Caco-2 (cell line): ENCODE measurements at regions of chr20 and their contacts with region 1.

Region 1: DNA sequence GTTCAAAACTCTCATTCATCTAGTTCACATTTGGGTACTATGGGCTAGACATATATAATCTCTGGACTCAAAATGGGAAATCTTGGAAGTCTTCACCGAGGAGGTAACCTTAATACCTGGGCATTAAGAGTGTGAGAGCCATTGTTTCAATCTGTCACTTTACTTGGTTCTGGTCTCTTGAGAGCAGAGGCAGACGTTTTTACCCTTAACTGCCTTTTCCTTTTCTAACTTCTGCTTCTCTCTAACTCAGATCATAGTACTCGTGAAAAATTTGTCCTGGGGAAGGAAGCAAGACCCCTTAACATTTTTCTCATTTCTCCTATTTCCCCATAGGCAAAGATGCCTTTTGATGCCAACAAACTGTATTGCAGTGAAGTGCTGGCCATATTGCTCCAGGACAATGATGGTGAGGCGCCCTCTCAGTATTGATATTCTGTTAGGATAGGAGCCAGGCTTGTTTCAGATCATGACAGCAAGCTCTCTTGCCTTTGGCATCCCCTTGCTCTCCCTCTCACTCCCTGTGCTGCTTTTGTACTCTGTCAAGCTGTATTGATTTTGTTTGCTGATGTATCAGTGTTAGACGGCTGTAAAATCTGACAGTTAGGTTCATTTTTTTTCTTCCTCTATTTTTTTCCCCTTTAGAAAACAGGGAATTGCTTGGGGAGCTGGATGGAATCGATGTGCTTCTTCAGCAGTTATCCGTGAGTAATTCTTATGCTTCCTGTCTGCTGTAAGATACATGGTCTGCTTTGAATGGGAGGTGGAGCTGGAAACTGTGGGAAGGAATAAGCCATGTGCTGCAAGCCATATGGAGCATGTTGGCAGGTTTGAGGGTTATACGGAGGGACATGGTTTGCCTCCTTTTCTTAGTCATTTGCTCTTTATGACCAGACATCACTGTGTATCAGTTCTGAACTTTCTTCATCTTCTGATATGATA is 83.5 kb downstream of the CTNNBL1 start:
- DNase-seq: no peak
- H3K4me3 ChIP-seq: no peak overlapping the region
- H3K4me3 Mint-ChIP-seq: no peak overlapping the region
- H3K27ac Mint-ChIP-seq: no peak overlapping the region
- H3K4me1 ChIP-seq: no peaks in the 10 kb centered on the region
- H3K4me1 Mint-ChIP-seq: no peaks in the 10 kb centered on the region
- H3K27me3 ChIP-seq: no peaks in the 10 kb centered on the region
- H3K27me3 Mint-ChIP-seq: no peaks in the 10 kb centered on the region
- CTCF ChIP-seq: no peak

Region 2: DNA sequence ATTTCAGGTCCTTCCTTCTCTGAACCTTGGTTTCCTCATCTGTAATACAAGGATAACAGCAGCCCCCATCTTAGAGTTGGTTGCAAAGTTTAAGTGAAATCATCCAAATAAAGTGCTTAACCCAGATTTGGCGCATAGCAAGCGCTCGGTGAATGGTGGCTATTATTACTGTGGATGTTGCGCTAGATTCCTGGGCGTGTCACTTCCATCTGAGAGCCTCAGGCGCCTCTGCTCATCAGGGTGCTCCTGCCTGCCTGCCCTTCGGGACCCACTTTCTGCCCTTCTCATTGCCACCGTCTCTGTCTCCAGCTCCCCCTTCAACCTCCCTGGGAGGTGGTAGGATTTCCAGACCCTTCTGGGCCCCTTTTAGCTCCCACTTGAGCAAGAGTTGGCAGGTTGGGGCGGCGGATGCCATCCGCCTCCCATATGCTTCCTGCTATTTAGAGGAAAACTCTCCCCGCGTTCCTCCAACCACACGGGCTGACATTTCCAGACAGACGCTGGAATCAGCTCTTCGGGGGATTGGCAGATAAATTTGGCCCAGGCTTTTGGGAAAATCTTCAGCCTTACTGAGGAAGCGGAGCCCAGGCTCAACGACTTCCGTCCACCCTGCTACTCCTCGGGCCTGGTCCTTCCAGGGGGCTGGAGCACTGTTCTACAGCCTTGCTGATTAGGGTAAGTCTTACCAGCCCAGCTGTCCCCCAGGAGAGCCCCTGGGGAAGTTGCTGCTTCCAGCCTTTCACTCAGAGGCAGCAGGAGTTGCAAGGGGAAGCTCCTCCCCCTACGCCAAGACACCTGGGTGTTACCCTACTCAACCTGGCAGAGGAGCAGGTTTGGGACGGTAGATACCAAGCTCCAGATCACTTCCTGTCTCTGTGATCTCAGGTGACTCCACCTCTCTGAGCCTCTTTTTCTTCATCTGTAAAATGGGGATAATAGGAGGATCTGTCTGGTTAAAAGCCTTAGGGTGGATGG is 1399.6 kb before region 1 on chr20:
- CTCF ChIA-PET with region 1: no interaction called
- POLR2A ChIA-PET with region 1: no interaction called
- intact Hi-C with region 1: loop called (anchors 5 kb)
- DNase-seq: no peak
- H3K4me3 ChIP-seq: no peak overlapping the region
- H3K4me3 Mint-ChIP-seq: no peak overlapping the region
- H3K27ac Mint-ChIP-seq: no peak overlapping the region
- H3K4me1 ChIP-seq: no peaks in the 10 kb centered on the region
- H3K4me1 Mint-ChIP-seq: no peaks in the 10 kb centered on the region
- H3K27me3 ChIP-seq: peaks cover 3% of the 10 kb centered on the region; the same call in 1 of the 2 replicates
- H3K27me3 Mint-ChIP-seq: peaks cover 39% of the 10 kb centered on the region
- CTCF ChIP-seq: no peak

Region 3: DNA sequence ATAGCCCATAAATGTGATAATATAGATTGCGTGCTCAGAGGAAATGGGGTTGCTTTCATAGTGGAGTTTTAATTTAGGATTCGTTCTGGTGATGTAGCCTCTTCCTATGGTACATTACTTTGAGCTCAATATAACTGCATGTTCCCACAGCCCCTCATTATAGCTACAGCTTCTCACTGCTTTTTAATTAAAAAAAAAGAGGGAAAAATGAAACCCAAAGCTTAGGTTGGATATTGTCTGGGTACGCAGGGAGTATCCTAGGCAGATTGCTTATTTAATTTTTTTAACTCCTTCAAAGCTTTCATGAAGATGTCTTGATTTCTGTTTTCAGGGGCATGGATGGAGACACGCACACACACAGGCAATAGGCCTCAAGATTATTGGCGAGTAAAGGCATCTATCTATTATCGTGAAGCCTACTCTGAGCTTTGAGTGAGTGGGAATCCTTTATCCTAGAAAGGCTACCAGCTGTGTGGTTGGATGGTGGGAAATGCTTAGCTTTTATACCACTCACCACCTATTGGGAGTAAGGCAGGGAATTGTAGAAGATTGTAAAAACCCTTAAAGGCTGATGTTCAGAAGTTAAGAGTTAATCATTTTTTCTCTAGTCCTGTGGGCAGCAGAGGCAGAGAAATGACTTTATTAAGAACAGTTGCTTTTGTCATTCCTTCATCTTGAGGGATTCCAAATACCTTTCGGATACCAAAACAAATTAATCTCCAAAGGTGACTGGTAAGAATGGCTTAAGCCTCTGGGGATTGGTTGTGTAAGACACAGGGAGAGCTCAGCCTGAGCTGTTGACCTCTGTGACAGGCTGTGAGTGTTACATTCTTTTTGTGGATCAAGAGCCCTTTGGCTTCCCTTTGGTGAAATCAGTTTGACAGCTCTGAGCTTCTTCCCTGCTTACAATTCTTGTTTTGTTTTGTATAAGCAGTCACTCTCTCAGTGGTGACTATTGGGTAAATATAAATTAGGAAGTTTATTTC is 50.0 kb before region 1 on chr20:
- CTCF ChIA-PET with region 1: no interaction called
- POLR2A ChIA-PET with region 1: no interaction called
- intact Hi-C with region 1: loop called (anchors 5 kb)
- DNase-seq: peak; percentile 58 to 66
- H3K4me3 ChIP-seq: no peak overlapping the region
- H3K4me3 Mint-ChIP-seq: no peak overlapping the region
- H3K27ac Mint-ChIP-seq: no peak overlapping the region
- H3K4me1 ChIP-seq: peaks cover 31% of the 10 kb centered on the region
- H3K4me1 Mint-ChIP-seq: peaks cover 12% of the 10 kb centered on the region
- H3K27me3 ChIP-seq: no peaks in the 10 kb centered on the region
- H3K27me3 Mint-ChIP-seq: no peaks in the 10 kb centered on the region
- CTCF ChIP-seq: no peak

Region 4: GRCh38 chr20:37839432-37839827 is 62.1 kb after region 1 on chr20:
- CTCF ChIA-PET with region 1: no interaction called
- POLR2A ChIA-PET with region 1: interaction called, 19 read pairs
- intact Hi-C with region 1: no loop called
- DNase-seq: no peak
- H3K4me3 ChIP-seq: no peak overlapping the region
- H3K4me3 Mint-ChIP-seq: no peak overlapping the region
- H3K27ac Mint-ChIP-seq: no peak overlapping the region
- H3K4me1 ChIP-seq: no peaks in the 10 kb centered on the region
- H3K4me1 Mint-ChIP-seq: peaks cover 12% of the 10 kb centered on the region
- H3K27me3 ChIP-seq: no peaks in the 10 kb centered on the region
- H3K27me3 Mint-ChIP-seq: no peaks in the 10 kb centered on the region
- CTCF ChIP-seq: no peak

Region 5: GRCh38 chr20:37901654-37902503 is 124.6 kb after region 1 on chr20:
- CTCF ChIA-PET with region 1: no interaction called
- POLR2A ChIA-PET with region 1: no interaction called
- intact Hi-C with region 1: no loop called
- DNase-seq: peak; percentile 64 to 65
- H3K4me3 ChIP-seq: no peak overlapping the region
- H3K4me3 Mint-ChIP-seq: no peak overlapping the region
- H3K27ac Mint-ChIP-seq: no peak overlapping the region
- H3K4me1 ChIP-seq: no peaks in the 10 kb centered on the region
- H3K4me1 Mint-ChIP-seq: peaks cover 6% of the 10 kb centered on the region
- H3K27me3 ChIP-seq: peaks cover 4% of the 10 kb centered on the region
- H3K27me3 Mint-ChIP-seq: peaks cover 25% of the 10 kb centered on the region
- CTCF ChIP-seq: peak; percentile 29 to 45

Region 6: DNA sequence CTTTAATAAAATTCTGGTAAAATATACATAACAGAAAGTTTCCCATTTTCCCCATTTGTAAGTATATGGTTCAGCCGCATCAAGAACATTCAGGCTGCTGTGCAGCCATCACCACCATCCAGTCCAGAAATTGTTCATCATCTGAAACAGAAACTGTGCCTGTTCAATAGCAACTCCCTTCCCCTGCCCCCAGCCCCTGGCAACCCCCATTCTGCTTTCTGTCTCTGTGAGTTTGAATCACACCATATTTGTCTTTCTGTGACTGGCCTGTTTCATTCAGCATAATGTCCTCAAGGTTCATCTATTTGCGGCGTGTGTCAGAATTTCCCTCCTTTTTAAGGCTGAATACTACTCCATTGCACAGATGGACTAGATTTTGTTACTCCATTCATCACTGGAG is 144.7 kb after region 1 on chr20:
- CTCF ChIA-PET with region 1: interaction called, 10 read pairs
- POLR2A ChIA-PET with region 1: no interaction called
- intact Hi-C with region 1: no loop called
- DNase-seq: no peak
- H3K4me3 ChIP-seq: no peak overlapping the region
- H3K4me3 Mint-ChIP-seq: no peak overlapping the region
- H3K27ac Mint-ChIP-seq: no peak overlapping the region
- H3K4me1 ChIP-seq: no peaks in the 10 kb centered on the region
- H3K4me1 Mint-ChIP-seq: no peaks in the 10 kb centered on the region
- H3K27me3 ChIP-seq: no peaks in the 10 kb centered on the region; the same call in 1 of the 2 replicates
- H3K27me3 Mint-ChIP-seq: peaks cover 15% of the 10 kb centered on the region
- CTCF ChIP-seq: no peak